BJ (cell line): ENCODE measurements at regions of chr22 and their contacts with region 1.

Region 1: GRCh38 chr22:41596776-41597634 is 7.4 kb upstream of the PMM1 start:
- DNase-seq: no peak
- H3K4me3 ChIP-seq: no peak overlapping the region
- H3K27me3 ChIP-seq: no peaks in the 10 kb centered on the region
- CTCF ChIP-seq: peak; percentile 82

Region 2: DNA sequence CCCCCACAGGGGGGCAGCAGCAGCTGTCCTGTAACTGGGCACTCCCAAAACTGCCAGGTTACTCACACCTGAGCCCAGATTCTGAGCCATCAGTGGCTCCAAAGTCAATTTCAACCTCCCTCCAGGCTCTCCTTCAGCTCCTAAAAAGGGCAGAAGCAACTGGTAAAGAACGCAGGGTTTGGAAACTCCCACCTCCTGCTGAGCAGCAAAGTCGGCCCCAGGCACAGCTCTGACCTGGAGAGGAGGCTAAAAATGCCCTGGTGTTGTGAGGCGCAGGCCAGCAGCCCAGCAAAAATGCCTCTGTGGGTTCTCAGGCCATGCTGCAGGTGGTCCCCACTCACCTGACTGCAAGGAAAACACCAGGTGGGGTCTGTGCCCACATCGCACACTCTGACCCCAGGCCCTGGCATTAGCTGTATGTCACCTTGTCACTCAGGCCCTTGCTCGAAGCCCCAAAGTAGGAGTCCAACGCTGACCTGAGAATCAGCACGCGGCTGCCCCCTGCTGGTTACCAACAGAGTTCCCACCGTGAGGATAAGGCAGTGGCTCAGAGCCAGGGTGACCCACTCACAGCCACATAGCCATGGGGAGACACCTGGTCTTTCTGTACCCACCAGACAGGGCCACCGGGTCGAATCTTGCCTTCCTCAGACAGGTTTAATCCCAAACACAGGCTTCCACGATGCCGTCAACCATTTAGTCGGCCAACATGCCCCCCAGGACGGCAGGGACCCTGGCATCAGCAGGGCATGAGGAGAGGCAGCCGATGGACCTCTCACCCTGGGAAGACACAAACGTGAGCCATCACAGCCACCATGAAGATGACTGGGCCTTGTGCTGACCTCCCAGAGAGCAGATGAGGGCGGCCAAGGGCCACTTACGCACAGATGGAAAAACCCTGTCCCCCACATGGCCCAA is 63.8 kb before region 1 on chr22:
- CTCF ChIA-PET with region 1: interaction called, 55 read pairs
- POLR2A ChIA-PET with region 1: no interaction called
- DNase-seq: no peak
- H3K4me3 ChIP-seq: no peak overlapping the region
- H3K27me3 ChIP-seq: no peaks in the 10 kb centered on the region
- CTCF ChIP-seq: peak; percentile 88

Region 3: GRCh38 chr22:41557401-41558240 is 39.4 kb before region 1 on chr22:
- CTCF ChIA-PET with region 1: interaction called, 27 read pairs
- POLR2A ChIA-PET with region 1: no interaction called
- DNase-seq: no peak
- H3K4me3 ChIP-seq: no peak overlapping the region
- H3K27me3 ChIP-seq: no peaks in the 10 kb centered on the region
- CTCF ChIP-seq: no peak

Region 4: GRCh38 chr22:41576877-41577276 is 20.1 kb before region 1 on chr22:
- CTCF ChIA-PET with region 1: interaction called, 16 read pairs
- POLR2A ChIA-PET with region 1: no interaction called
- DNase-seq: no peak
- H3K4me3 ChIP-seq: no peak overlapping the region
- H3K27me3 ChIP-seq: no peaks in the 10 kb centered on the region
- CTCF ChIP-seq: peak; percentile 71

Region 5: DNA sequence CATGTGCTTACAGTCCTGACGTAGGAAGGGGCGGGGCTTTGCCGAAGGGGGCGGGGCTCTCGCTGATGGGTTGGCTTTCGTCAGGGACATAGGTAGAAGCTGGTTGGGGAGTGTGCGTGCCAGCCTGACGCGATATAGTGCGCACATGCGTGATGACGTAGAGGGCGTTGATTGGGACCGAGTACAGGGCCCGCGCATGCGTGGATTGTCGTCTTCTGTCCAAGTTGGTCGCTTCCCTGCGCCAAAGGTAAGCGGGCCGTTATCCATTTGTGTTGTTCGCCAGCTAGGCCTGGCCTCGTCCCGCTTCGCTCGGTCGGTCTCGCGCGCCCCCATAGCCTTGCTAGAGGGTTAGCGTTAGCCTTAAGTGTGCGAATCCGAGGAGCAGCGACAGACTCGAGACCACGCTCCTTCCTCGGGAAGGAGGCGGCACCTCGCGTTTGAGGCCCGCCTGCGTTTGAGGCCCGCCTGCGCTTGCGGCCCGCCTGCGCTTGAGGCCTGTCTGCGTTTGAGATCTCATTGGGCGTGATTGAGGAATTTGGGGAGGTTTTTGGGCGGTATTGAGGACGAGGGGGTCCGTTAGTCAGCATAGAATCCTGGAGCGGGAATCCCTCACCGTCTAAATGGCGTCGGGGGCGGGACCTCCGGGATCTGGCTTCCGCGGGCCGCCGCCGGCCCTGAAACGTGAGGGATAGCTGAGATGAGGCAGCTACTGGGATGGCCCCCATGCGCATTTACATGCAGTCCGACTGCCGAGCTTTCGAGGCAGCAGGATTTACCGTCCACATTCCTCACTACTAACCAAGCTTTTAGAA is 24.3 kb after region 1 on chr22 and contains the start of gene XRCC6:
- CTCF ChIA-PET with region 1: interaction called, 17 read pairs
- POLR2A ChIA-PET with region 1: no interaction called
- DNase-seq: peak; percentile 98
- H3K4me3 ChIP-seq: peak within 1 kb of the TSS; percentile 93
- H3K27me3 ChIP-seq: no peaks in the 10 kb centered on the region
- CTCF ChIP-seq: no peak
- polyA plus RNA-seq, gene XRCC6: 105 and 137 TPM in 2 replicates

Region 6: GRCh38 chr22:41636467-41636866 is 39.5 kb after region 1 on chr22:
- CTCF ChIA-PET with region 1: no interaction called
- POLR2A ChIA-PET with region 1: no interaction called
- DNase-seq: no peak
- H3K4me3 ChIP-seq: no peak overlapping the region
- H3K27me3 ChIP-seq: no peaks in the 10 kb centered on the region
- CTCF ChIP-seq: no peak

Region 7: GRCh38 chr22:41666661-41667258 is 69.8 kb after region 1 on chr22:
- CTCF ChIA-PET with region 1: no interaction called
- POLR2A ChIA-PET with region 1: no interaction called
- DNase-seq: peak; percentile 47
- H3K4me3 ChIP-seq: peak overlapping the region; percentile 9
- H3K27me3 ChIP-seq: no peaks in the 10 kb centered on the region
- CTCF ChIP-seq: peak; percentile 99

Region 8: GRCh38 chr22:41688365-41689211 is 91.6 kb after region 1 on chr22 and contains the start of gene SNU13:
- CTCF ChIA-PET with region 1: no interaction called
- POLR2A ChIA-PET with region 1: no interaction called
- DNase-seq: no peak
- H3K4me3 ChIP-seq: peak within 1 kb of the TSS; percentile 82
- H3K27me3 ChIP-seq: no peaks in the 10 kb centered on the region
- CTCF ChIP-seq: no peak
- polyA plus RNA-seq, gene SNU13: 288 and 327 TPM in 2 replicates

Region 9: GRCh38 chr22:41746567-41747400 is 149.8 kb after region 1 on chr22:
- CTCF ChIA-PET with region 1: no interaction called
- POLR2A ChIA-PET with region 1: no interaction called
- DNase-seq: peak; percentile 38
- H3K4me3 ChIP-seq: no peak overlapping the region
- H3K27me3 ChIP-seq: peaks cover 16% of the 10 kb centered on the region
- CTCF ChIP-seq: peak; percentile 90